ENCODE measurements at regions of chr6 and their contacts with region 1.

Region 1: GRCh38 chr6:134063966-134064445 is 11.6 kb upstream of the SLC2A12 start:
- H3K4me3 ChIP-seq: no peak overlapping the region
- H3K27ac ChIP-seq: no peak overlapping the region
- H3K4me1 ChIP-seq: no peaks in the 10 kb centered on the region
- CTCF ChIP-seq: peak; percentile 91

Region 2: DNA sequence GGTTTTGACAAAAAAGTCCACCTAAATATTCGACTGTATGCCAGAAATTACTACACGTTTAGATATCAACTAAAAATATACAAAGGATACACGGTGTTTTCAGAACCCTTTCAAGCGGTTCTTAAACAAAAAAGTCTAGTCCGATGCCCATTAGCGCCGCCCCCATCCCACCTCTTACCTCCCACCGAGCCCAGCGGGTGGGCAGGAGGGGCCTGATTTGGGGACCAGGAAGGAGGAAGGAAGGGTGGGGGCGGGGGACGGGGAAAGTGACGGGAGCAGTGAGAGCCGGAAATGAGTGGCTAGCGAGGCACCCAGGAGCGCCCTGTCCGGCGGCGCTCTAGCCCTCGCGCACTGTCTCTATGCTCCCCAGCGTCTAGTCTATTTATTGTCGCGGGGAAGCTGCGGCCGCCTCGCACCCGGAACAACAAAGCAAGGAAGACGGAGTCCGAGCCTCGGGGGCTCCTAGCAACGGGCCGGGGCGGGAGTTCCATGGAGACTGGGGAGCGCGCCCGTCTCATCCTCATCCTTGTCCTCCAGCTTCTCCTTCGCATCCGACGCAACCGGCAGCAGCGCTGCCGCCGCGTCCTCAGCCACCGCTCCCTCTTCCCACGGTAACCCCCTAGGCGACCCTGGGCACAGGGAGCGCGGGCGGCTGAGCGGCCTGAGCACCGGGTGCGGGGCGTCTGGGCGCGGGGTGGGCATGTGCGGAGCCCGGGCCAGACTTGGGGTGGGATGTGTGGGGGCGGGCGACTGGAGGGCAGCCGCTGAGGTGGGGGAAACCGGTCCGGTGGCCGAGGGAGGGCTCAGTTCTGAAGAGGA is 111.0 kb before region 1 on chr6 and contains the start of gene TBPL1:
- CTCF ChIA-PET with region 1: interaction called, 38 read pairs
- POLR2A ChIA-PET with region 1: interaction called, 4 read pairs
- H3K4me3 ChIP-seq: peak within 1 kb of the TSS; percentile 98
- H3K27ac ChIP-seq: peak within 1 kb of the TSS; percentile 70
- H3K4me1 ChIP-seq: peaks cover 18% of the 10 kb centered on the region
- CTCF ChIP-seq: no peak

Region 3: DNA sequence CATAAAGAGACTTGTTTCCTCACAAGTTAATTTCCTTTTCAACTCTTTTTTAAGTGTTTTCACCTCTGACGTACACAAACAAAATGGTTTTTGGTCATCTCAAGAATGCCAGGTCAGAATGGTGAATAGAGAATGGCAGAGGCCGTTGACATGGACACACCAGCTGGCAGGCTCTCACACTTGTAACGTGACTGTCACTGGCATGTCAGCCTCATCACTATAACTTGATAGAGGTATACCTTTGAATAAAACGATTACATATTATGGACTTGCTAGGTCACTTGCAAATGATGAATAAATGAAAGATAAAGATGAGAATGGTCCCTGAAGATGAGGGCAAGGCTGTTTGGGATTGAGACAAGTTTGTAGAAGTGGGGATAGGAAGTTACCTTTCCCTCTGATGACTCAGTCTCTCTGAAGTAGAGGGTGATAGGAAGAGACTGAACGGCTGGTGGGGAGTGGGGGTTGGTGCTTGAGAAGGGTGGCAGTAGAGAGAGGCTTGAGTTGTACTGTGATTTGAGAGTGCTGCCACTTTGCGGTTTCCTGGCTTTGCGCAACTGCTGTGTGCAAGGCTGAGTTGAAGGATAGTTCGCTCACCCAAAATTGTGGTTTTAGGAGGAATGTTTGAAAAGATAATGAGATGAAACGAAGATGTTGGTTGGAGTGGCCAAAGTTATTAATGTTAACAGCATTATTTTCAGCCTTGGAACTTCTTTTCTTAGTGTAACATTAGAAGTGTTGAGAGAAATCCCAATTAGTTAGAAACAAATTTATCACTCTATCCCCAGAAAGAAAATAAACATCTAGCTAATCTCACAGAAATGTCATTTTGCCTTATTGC is 80.7 kb before region 1 on chr6:
- CTCF ChIA-PET with region 1: interaction called, 304 read pairs
- POLR2A ChIA-PET with region 1: interaction called, 10 read pairs
- H3K4me3 ChIP-seq: no peak overlapping the region
- H3K27ac ChIP-seq: no peak overlapping the region; the same call in 1 of the 2 replicates
- H3K4me1 ChIP-seq: peaks cover 22% of the 10 kb centered on the region
- CTCF ChIP-seq: peak; percentile 68; the same call in 1 of the 2 replicates

Region 4: DNA sequence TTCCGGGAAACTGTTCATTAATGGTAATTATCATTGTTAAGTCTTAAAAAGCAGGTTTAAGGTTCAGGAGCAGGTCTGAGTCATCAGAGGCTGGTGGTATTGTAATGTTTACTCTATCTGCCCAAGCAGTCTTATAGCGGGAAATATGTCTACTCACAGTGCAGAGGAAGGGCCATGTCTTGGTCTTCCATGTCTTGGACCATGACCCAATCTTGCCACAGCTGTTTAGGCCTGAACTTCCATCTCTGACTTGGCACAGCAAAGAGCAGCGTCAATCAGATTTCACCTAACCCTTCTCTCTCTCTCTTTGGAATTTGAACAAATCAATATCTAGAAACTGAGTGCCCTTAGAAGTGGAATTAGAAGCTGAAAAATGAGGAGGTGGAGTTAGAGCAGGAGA is 37.4 kb before region 1 on chr6:
- CTCF ChIA-PET with region 1: interaction called, 32 read pairs
- POLR2A ChIA-PET with region 1: no interaction called
- H3K4me3 ChIP-seq: no peak overlapping the region
- H3K27ac ChIP-seq: no peak overlapping the region
- H3K4me1 ChIP-seq: 0 out of 2 replicates have a peak, but pooled peaks cover 3% of the 10 kb centered on the region
- CTCF ChIP-seq: no peak

Region 5: GRCh38 chr6:134080171-134080795 is 16.3 kb after region 1 on chr6:
- CTCF ChIA-PET with region 1: interaction called, 44 read pairs
- POLR2A ChIA-PET with region 1: interaction called, 3 read pairs
- H3K4me3 ChIP-seq: no peak overlapping the region
- H3K27ac ChIP-seq: no peak overlapping the region
- H3K4me1 ChIP-seq: peaks cover 11% of the 10 kb centered on the region; the same call in 1 of the 2 replicates
- CTCF ChIP-seq: no peak

Region 6: GRCh38 chr6:134352786-134353480 is 288.9 kb after region 1 on chr6:
- CTCF ChIA-PET with region 1: no interaction called
- POLR2A ChIA-PET with region 1: no interaction called
- H3K4me3 ChIP-seq: no peak overlapping the region
- H3K27ac ChIP-seq: no peak overlapping the region
- H3K4me1 ChIP-seq: peaks cover 2% of the 10 kb centered on the region; the same call in 1 of the 2 replicates
- CTCF ChIP-seq: no peak

Measured in HEK293 (cell line).